ENCODE measurements at regions of chr7 and their contacts with region 1.

Region 1: GRCh38 chr7:37916673-37917660 is at the start of gene SFRP4:
- DNase-seq: no peak
- ATAC-seq: peak; percentile 44
- H3K4me3 ChIP-seq: peak within 1 kb of the TSS; percentile 48
- H3K27ac ChIP-seq: no peak within 1 kb of the TSS
- H3K4me1 ChIP-seq: peaks cover 13% of the 10 kb centered on the region
- H3K27me3 ChIP-seq: peaks cover 0 to 4% of the 10 kb centered on the region in 2 experiments; a peak in 2 of 4 replicates
- CTCF ChIP-seq: peak; percentile 72 to 74 (median 73)
- EP300 ChIP-seq: no peak
- POLR2A ChIP-seq: no peak
- RAD21 ChIP-seq: peak; percentile 67
- polyA plus RNA-seq, gene SFRP4: 0.02 TPM in 1 of 2 experiments, not detected in the other

Region 2: GRCh38 chr7:37709631-37710509 is 207.1 kb before region 1 on chr7:
- CTCF ChIA-PET with region 1: no interaction called
- POLR2A ChIA-PET with region 1: no interaction called
- RAD21 ChIA-PET with region 1: no interaction called
- SMC1A ChIA-PET with region 1: no interaction called
- in situ Hi-C with region 1: no loop called
- intact Hi-C with region 1: no loop called
- DNase-seq: peak; percentile 75
- ATAC-seq: peak; percentile 99
- H3K4me3 ChIP-seq: peak overlapping the region; percentile 25; the same call in 1 of the 2 replicates
- H3K27ac ChIP-seq: peak overlapping the region; percentile 40; the same call in 1 of the 2 replicates
- H3K4me1 ChIP-seq: peaks cover 13% of the 10 kb centered on the region
- H3K27me3 ChIP-seq: no peaks in the 10 kb centered on the region
- CTCF ChIP-seq: no peak
- EP300 ChIP-seq: peak in 1 of 2 experiments; percentile 20; a peak in 1 of 4 replicates
- POLR2A ChIP-seq: no peak
- RAD21 ChIP-seq: no peak

Region 3: DNA sequence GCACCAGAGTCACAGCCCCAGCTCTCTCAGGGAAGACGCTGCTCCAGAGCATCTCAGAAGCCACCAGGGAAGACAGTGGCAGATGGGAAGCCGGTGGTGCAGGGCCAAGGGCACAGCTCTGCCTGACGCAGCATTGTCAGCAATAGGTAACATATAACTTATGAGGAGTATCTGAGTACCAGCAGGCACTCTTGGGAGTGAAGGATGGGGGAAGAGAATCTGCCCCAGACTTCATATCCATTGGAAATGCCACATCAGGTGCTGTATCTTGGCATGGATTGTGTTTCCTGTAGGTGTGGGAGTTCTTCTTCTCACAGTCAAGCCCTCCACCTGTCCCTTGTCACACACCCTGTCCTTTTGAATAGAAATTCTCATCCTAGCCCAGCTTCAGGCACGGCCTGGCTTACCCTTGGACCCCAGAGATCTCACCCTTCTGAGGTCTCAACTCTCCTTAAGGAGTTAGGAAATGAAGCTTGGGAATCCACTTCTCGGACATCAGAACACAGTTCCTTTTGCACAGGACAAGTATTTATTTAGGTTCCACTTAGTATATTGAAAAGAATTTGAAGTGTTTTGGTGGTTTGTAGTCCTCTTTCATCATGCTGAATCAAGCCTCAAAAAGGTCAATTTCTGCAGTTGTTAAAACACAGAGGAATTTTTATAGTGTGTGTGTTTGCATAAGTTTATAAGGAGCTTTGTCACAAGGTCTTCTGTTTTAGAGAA is 13.4 kb after region 1 on chr7:
- CTCF ChIA-PET with region 1: interaction called, 32 read pairs
- POLR2A ChIA-PET with region 1: interaction called, 4 read pairs
- RAD21 ChIA-PET with region 1: interaction called, 4 read pairs
- SMC1A ChIA-PET with region 1: interaction called, 9 read pairs
- in situ Hi-C with region 1: no loop called
- intact Hi-C with region 1: no loop called
- DNase-seq: no peak
- ATAC-seq: no peak; the same call in 2 of the 3 replicates
- H3K4me3 ChIP-seq: no peak overlapping the region
- H3K27ac ChIP-seq: no peak overlapping the region
- H3K4me1 ChIP-seq: no peaks in the 10 kb centered on the region
- H3K27me3 ChIP-seq: no peaks in the 10 kb centered on the region
- CTCF ChIP-seq: no peak
- EP300 ChIP-seq: no peak
- POLR2A ChIP-seq: no peak
- RAD21 ChIP-seq: no peak

Region 4: GRCh38 chr7:37973915-37974314 is 56.9 kb after region 1 on chr7:
- CTCF ChIA-PET with region 1: interaction called, 10 read pairs
- POLR2A ChIA-PET with region 1: no interaction called
- RAD21 ChIA-PET with region 1: no interaction called
- SMC1A ChIA-PET with region 1: interaction called, 4 read pairs
- in situ Hi-C with region 1: no loop called
- intact Hi-C with region 1: no loop called
- DNase-seq: no peak
- ATAC-seq: peak; percentile 63
- H3K4me3 ChIP-seq: no peak overlapping the region
- H3K27ac ChIP-seq: no peak overlapping the region
- H3K4me1 ChIP-seq: no peaks in the 10 kb centered on the region
- H3K27me3 ChIP-seq: no peaks in the 10 kb centered on the region
- CTCF ChIP-seq: no peak
- EP300 ChIP-seq: no peak
- POLR2A ChIP-seq: no peak
- RAD21 ChIP-seq: no peak

Region 5: DNA sequence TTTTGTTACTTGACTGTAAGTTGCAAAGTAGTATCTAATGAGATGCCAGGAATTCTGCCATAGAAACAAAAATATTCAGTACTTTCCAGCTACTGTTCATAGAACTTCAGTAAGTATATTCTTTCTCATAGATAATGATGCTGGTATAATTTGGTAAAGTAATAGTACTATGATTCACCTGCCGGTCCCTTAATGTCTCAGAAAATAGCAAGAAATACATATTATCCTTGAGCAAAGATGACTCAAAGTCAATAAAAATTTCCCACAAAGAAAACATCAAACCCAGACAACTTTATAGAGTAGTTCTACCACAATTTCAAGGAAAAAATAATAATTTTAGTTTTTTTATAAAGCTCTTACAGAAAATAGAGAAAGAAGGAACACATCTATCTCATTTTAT is 108.8 kb after region 1 on chr7:
- CTCF ChIA-PET with region 1: interaction called, 14 read pairs
- POLR2A ChIA-PET with region 1: no interaction called
- RAD21 ChIA-PET with region 1: interaction called, 11 read pairs
- SMC1A ChIA-PET with region 1: interaction called, 14 read pairs
- in situ Hi-C with region 1: no loop called
- intact Hi-C with region 1: loop called (anchors 5 kb)
- DNase-seq: no peak
- ATAC-seq: no peak
- H3K4me3 ChIP-seq: no peak overlapping the region
- H3K27ac ChIP-seq: no peak overlapping the region
- H3K4me1 ChIP-seq: no peaks in the 10 kb centered on the region
- H3K27me3 ChIP-seq: no peaks in the 10 kb centered on the region
- CTCF ChIP-seq: no peak
- EP300 ChIP-seq: no peak
- POLR2A ChIP-seq: no peak
- RAD21 ChIP-seq: no peak

Region 6: GRCh38 chr7:38107486-38107893 is 190.5 kb after region 1 on chr7:
- CTCF ChIA-PET with region 1: interaction called, 72 read pairs
- POLR2A ChIA-PET with region 1: interaction called, 5 read pairs
- RAD21 ChIA-PET with region 1: interaction called, 23 read pairs
- SMC1A ChIA-PET with region 1: interaction called, 45 read pairs
- in situ Hi-C with region 1: no loop called
- intact Hi-C with region 1: loop called (anchors 5 kb)
- DNase-seq: peak; percentile 44
- ATAC-seq: peak; percentile 97
- H3K4me3 ChIP-seq: no peak overlapping the region
- H3K27ac ChIP-seq: no peak overlapping the region
- H3K4me1 ChIP-seq: no peaks in the 10 kb centered on the region; the same call in 1 of the 2 replicates
- H3K27me3 ChIP-seq: no peaks in the 10 kb centered on the region
- CTCF ChIP-seq: peak; percentile 76 to 93 (median 81)
- EP300 ChIP-seq: no peak
- POLR2A ChIP-seq: no peak
- RAD21 ChIP-seq: peak; percentile 99

Region 7: DNA sequence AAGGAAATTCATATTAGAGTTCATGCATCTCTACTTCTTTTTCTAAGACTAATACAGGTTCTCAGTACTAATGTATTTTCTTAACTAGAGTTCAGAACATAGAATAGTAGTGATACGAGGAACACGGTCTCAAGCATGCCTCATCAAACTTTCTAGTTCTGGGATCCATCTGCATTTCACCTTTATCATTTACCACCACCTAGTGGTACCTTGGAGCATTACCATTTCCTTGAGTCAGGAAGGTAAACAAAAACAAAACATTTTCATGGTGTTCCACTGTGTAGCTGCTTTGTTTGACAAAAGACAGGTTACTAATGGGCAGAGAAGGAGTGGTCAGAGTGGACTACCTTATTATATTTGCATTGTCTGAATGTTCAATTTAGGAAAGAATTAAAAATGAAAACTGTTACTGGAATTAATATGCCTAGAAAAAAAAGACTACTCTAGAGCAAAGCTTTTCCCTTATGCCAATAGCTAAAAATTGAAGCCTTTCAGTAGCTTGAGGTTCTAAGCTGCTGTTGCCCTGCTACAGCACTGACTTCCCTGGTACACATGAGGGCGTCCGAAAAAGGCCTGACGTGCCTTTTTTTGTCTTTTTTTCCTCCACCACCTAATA is 305.6 kb after region 1 on chr7:
- CTCF ChIA-PET with region 1: interaction called, 53 read pairs
- POLR2A ChIA-PET with region 1: no interaction called
- RAD21 ChIA-PET with region 1: interaction called, 5 read pairs
- SMC1A ChIA-PET with region 1: interaction called, 11 read pairs
- in situ Hi-C with region 1: no loop called
- intact Hi-C with region 1: loop called (anchors 5 kb)
- DNase-seq: peak; percentile 34
- ATAC-seq: peak; percentile 87
- H3K4me3 ChIP-seq: no peak overlapping the region
- H3K27ac ChIP-seq: no peak overlapping the region
- H3K4me1 ChIP-seq: no peaks in the 10 kb centered on the region
- H3K27me3 ChIP-seq: no peaks in the 10 kb centered on the region
- CTCF ChIP-seq: peak; percentile 72 to 79 (median 79)
- EP300 ChIP-seq: no peak
- POLR2A ChIP-seq: no peak
- RAD21 ChIP-seq: peak; percentile 97